ENCODE measurements at regions of chr5 and their contacts with region 1.

Region 1: GRCh38 chr5:100777680-100778281 is 125.3 kb downstream of the ST8SIA4 start:
- DNase-seq: no peak
- ATAC-seq: peak; percentile 65
- H3K4me3 Mint-ChIP-seq: peak overlapping the region; percentile 69
- H3K27ac Mint-ChIP-seq: peak overlapping the region; percentile 88
- H3K4me1 Mint-ChIP-seq: peaks cover 60% of the 10 kb centered on the region
- H3K27me3 Mint-ChIP-seq: no peaks in the 10 kb centered on the region
- CTCF ChIP-seq: no peak

Region 2: GRCh38 chr5:100535060-100536005 is 242.4 kb before region 1 on chr5 and contains the start of gene FAM174A:
- CTCF ChIA-PET with region 1: no interaction called
- POLR2A ChIA-PET with region 1: no interaction called
- intact Hi-C with region 1: loop called (anchors 5 kb)
- DNase-seq: peak; percentile 87
- ATAC-seq: peak; percentile 91
- H3K4me3 Mint-ChIP-seq: peak within 1 kb of the TSS; percentile 99
- H3K27ac Mint-ChIP-seq: peak within 1 kb of the TSS; percentile 91
- H3K4me1 Mint-ChIP-seq: peaks cover 21% of the 10 kb centered on the region
- H3K27me3 Mint-ChIP-seq: peaks cover 2% of the 10 kb centered on the region
- CTCF ChIP-seq: no peak
- total RNA-seq, gene FAM174A: 4.1 and 5.2 TPM in 2 replicates

Region 3: GRCh38 chr5:100731768-100732167 is 46.0 kb before region 1 on chr5:
- CTCF ChIA-PET with region 1: no interaction called
- POLR2A ChIA-PET with region 1: no interaction called
- intact Hi-C with region 1: no loop called
- DNase-seq: no peak
- ATAC-seq: peak; percentile 56
- H3K4me3 Mint-ChIP-seq: peak overlapping the region; percentile 62
- H3K27ac Mint-ChIP-seq: peak overlapping the region; percentile 14
- H3K4me1 Mint-ChIP-seq: peaks cover 7% of the 10 kb centered on the region
- H3K27me3 Mint-ChIP-seq: no peaks in the 10 kb centered on the region
- CTCF ChIP-seq: no peak

Region 4: GRCh38 chr5:100803397-100803796 is 25.6 kb after region 1 on chr5:
- CTCF ChIA-PET with region 1: interaction called, 4 read pairs
- POLR2A ChIA-PET with region 1: interaction called, 4 read pairs
- intact Hi-C with region 1: loop called (anchors 2 kb)
- DNase-seq: no peak
- ATAC-seq: no peak
- H3K4me3 Mint-ChIP-seq: no peak overlapping the region
- H3K27ac Mint-ChIP-seq: no peak overlapping the region
- H3K4me1 Mint-ChIP-seq: peaks cover 29% of the 10 kb centered on the region
- H3K27me3 Mint-ChIP-seq: no peaks in the 10 kb centered on the region
- CTCF ChIP-seq: no peak

Region 5: GRCh38 chr5:100827481-100827889 is 49.7 kb after region 1 on chr5:
- CTCF ChIA-PET with region 1: interaction called, 3 read pairs
- POLR2A ChIA-PET with region 1: interaction called, 16 read pairs
- intact Hi-C with region 1: loop called (anchors 1 kb)
- DNase-seq: no peak
- ATAC-seq: peak; percentile 35
- H3K4me3 Mint-ChIP-seq: peak overlapping the region; percentile 72
- H3K27ac Mint-ChIP-seq: peak overlapping the region; percentile 89
- H3K4me1 Mint-ChIP-seq: peaks cover 39% of the 10 kb centered on the region
- H3K27me3 Mint-ChIP-seq: no peaks in the 10 kb centered on the region
- CTCF ChIP-seq: no peak

Region 6: DNA sequence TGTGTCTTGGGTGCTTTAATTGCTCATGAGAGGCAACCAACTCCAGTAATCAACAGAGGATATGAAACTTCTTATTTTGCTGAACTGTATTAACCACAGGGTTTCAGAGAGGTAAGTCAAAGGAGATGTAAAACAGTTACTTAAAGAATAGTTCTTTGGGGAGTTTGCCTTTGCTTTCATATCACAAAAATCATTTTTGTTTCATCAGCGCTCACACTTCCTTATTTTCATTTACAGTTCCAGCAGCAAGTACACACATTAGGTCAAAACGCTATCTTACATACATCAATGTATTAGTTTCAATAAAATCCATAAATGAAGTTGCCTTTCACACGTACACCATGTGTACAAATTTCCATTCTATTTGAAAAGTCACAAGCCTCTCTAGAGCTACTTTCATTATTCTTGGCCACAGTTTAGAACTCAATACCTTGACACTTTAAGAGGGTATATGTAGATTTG is 75.2 kb after region 1 on chr5:
- CTCF ChIA-PET with region 1: interaction called, 4 read pairs
- POLR2A ChIA-PET with region 1: interaction called, 4 read pairs
- intact Hi-C with region 1: loop called (anchors 1 kb)
- DNase-seq: no peak
- ATAC-seq: peak; percentile 92
- H3K4me3 Mint-ChIP-seq: peak overlapping the region; percentile 55
- H3K27ac Mint-ChIP-seq: peak overlapping the region; percentile 83
- H3K4me1 Mint-ChIP-seq: peaks cover 55% of the 10 kb centered on the region
- H3K27me3 Mint-ChIP-seq: no peaks in the 10 kb centered on the region
- CTCF ChIP-seq: no peak

Region 7: GRCh38 chr5:101024299-101024698 is 246.5 kb after region 1 on chr5:
- CTCF ChIA-PET with region 1: no interaction called
- POLR2A ChIA-PET with region 1: no interaction called
- intact Hi-C with region 1: loop called (anchors 1 kb)
- DNase-seq: no peak
- ATAC-seq: peak; percentile 96
- H3K4me3 Mint-ChIP-seq: no peak overlapping the region
- H3K27ac Mint-ChIP-seq: no peak overlapping the region
- H3K4me1 Mint-ChIP-seq: peaks cover 13% of the 10 kb centered on the region
- H3K27me3 Mint-ChIP-seq: peaks cover under 1% of the 10 kb centered on the region
- CTCF ChIP-seq: no peak

Region 8: DNA sequence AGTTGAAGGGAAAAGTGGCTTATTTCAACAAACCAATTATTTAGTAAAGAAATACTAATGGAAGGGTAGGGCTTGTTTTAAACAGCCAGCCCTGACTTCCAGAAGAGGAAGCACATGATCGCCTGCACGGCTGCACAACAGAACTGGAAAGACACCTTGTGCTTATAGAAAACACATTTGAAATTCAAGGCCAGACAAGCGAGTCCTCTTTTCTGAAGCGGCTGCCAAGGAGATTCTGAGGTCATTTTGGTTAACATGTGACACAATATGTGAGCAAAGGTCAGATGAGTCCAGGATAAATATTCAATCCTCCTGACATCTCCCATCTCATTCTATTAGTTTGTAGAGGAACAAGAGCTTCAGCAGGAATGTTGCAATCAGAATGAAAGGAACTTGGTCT is 586.7 kb after region 1 on chr5:
- CTCF ChIA-PET with region 1: no interaction called
- POLR2A ChIA-PET with region 1: no interaction called
- intact Hi-C with region 1: loop called (anchors 10 kb)
- DNase-seq: no peak
- ATAC-seq: no peak
- H3K4me3 Mint-ChIP-seq: no peak overlapping the region
- H3K27ac Mint-ChIP-seq: no peak overlapping the region
- H3K4me1 Mint-ChIP-seq: no peaks in the 10 kb centered on the region
- H3K27me3 Mint-ChIP-seq: no peaks in the 10 kb centered on the region
- CTCF ChIP-seq: no peak

Measured in activated B cell treated with CpG ODN at 0.5 μM for 24 hours (primary cell).